ENCODE measurements at regions of chr9 and their contacts with region 1.

Region 1: DNA sequence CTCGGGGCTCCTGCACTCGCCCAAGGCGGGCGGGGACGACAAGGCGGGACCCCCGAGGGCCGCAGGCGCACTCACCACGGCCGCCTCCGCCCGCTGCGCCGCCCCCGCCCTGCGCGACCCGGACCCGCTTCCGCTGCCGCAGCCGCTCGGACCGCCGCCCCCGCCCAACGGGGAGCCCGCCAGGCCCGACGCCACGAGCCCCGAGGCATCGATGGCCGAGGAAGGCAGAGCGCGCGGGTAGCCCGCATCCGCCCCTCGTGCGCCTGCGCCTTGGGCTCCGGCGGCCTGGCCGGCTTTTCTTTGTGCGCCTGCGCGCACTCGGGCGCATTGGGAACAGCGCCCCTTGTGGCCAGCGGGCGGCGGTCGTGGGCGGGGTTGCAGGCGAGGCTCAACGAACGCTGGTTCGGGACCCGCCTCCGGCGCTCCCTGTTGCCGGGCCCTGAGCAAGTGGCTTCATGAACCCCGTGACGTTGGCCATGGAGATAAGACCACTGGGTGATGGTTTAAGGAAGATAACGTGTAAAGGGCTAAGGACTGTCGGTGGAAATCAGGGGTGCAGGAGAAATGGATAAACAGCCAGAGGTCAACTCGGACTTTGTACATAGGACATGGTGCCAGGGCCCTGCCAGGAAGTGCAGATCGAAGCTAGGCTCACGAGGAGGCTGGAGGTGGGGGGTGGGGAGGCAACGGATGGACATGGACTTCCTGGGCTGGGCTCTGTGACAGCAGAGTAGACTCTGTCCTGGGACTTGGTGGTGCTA is at the starts of genes C8G and FBXW5:
- DNase-seq: peak; percentile 89 to 97 (median 96)
- H3K4me3 ChIP-seq: peak within 1 kb of the TSS in 1 of 2 donors; percentile 70
- H3K4me3 Mint-ChIP-seq: peak within 1 kb of the TSS; percentile 75 to 88 (median 85)
- H3K27ac ChIP-seq: peak within 1 kb of the TSS; percentile 59
- H3K27ac Mint-ChIP-seq: peak within 1 kb of the TSS; percentile 66 to 90 (median 81)
- H3K4me1 ChIP-seq: peaks cover 23% of the 10 kb centered on the region
- H3K4me1 Mint-ChIP-seq: peaks cover 3 to 17% (median 9%) of the 10 kb centered on the region in 4 donors
- H3K27me3 ChIP-seq: no peaks in the 10 kb centered on the region
- H3K27me3 Mint-ChIP-seq: no peaks in the 10 kb centered on the region
- total RNA-seq, gene C8G: 2.2 TPM
- total RNA-seq, gene FBXW5: 122 to 123 TPM

Region 2: DNA sequence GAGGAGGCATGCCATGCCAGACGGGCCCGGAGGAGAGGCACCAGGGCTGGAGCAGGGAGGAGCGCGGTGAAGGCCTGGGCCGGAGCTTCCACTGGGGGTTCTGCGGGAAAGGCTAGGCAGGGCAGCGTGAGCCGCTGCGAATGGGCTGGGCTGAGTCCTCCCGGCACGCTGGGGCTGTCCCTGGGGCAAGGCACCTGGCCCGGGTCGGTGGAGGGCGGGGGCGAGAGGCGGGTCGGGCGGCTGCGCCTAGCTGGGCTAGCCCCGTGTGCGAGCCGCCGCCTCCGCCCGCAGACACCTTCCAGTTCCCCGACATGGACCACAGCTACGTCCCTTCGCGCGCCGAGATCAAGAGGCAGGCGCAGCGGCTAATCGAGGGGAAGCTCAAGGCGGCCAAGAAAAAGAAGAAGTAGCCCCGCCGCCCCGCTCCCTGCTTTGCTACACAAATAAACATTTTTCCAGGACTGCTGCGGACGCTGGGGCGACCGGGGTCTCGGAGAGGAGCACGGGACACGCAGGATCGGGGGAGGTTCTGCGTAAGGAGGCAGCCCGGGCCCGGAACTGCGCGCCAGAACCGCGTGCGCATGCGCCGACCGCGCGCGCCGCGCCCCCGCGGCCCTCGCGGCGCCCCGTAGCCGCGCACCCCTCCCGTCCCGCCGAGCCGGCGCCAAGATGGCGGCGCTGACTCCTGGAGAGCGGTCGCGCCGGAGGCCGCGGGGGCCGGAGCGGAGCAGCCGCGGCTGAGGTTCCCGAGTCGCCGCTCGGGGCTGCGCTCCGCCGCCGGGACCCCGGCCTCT is 137.2 kb before region 1 on chr9 and contains the start of gene RABL6:
- CTCF ChIA-PET with region 1: no interaction called
- POLR2A ChIA-PET with region 1: interaction called, 16 read pairs
- intact Hi-C with region 1: no loop called
- DNase-seq: peak; percentile 78 to 90 (median 86)
- H3K4me3 ChIP-seq: peak within 1 kb of the TSS; percentile 61 to 74
- H3K4me3 Mint-ChIP-seq: peak within 1 kb of the TSS; percentile 87 to 93 (median 90)
- H3K27ac ChIP-seq: peak within 1 kb of the TSS; percentile 83
- H3K27ac Mint-ChIP-seq: peak within 1 kb of the TSS; percentile 91 to 96 (median 94)
- H3K4me1 ChIP-seq: peaks cover 40% of the 10 kb centered on the region
- H3K4me1 Mint-ChIP-seq: peaks cover 11 to 45% (median 30%) of the 10 kb centered on the region in 4 donors
- H3K27me3 ChIP-seq: no peaks in the 10 kb centered on the region
- H3K27me3 Mint-ChIP-seq: no peaks in the 10 kb centered on the region
- total RNA-seq, gene RABL6: 65.1 to 70.9 TPM

Region 3: DNA sequence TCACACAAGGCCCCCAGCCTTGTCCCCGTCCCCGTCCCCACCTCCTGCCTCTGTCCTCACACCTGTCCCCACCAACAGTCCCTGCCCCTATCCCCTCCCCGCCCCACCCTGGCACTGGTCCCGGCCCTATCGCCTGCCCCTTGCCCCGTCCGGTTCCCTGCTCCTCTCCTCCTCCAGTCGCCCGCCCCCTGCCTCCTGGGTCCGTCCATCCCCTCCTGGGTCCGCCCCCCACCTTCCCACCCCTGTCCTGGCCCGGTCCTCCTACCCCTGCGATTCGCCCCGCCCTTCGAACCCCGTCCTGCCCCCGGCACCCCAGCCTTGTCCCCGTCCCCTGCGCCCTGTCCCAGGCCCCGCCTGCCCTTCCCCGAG is 79.0 kb before region 1 on chr9:
- CTCF ChIA-PET with region 1: no interaction called
- POLR2A ChIA-PET with region 1: interaction called, 8 read pairs
- intact Hi-C with region 1: loop called (anchors 1 kb)
- DNase-seq: peak in 1 of 5 donors; percentile 50
- H3K4me3 ChIP-seq: peak overlapping the region; percentile 40 to 75
- H3K4me3 Mint-ChIP-seq: peak overlapping the region; percentile 75 to 93 (median 85)
- H3K27ac ChIP-seq: peak overlapping the region; percentile 87
- H3K27ac Mint-ChIP-seq: peak overlapping the region; percentile 75 to 94 (median 85)
- H3K4me1 ChIP-seq: peaks cover 18% of the 10 kb centered on the region
- H3K4me1 Mint-ChIP-seq: peaks cover 4 to 23% (median 11%) of the 10 kb centered on the region in 4 donors
- H3K27me3 ChIP-seq: no peaks in the 10 kb centered on the region
- H3K27me3 Mint-ChIP-seq: no peaks in the 10 kb centered on the region

Region 4: DNA sequence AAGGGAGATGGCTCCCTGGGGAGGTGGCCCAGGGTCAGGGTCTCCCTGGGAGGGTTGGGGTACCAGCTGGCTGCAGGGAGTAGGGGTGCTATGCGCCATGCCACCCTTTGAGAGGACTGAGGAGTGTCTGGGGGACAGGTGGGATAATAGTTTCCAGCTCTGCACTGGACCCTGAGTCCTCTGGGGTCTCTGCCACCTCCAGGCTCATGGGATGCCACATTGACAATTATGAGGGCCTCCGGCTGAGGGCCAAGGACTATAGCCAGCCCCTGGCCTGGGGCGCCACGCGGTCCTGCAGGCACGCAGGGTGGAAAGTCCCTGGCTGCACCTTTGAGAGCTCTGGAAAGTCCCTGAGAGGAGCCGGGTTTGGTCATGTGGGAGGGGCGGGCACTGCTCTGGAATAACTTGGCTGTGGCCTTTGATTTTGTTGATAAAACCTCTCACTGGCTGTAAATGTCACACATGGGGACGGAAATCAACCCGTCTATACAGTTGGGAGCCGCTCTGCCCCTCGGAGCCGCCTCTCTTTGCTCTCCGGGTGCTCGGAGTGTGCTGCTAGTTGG is 42.4 kb before region 1 on chr9:
- CTCF ChIA-PET with region 1: interaction called, 5 read pairs
- POLR2A ChIA-PET with region 1: interaction called, 13 read pairs
- intact Hi-C with region 1: loop called (anchors 2 kb)
- DNase-seq: peak; percentile 78 to 98 (median 84)
- H3K4me3 ChIP-seq: peak overlapping the region; percentile 13 to 53
- H3K4me3 Mint-ChIP-seq: peak overlapping the region; percentile 81 to 90 (median 84)
- H3K27ac ChIP-seq: peak overlapping the region; percentile 96
- H3K27ac Mint-ChIP-seq: peak overlapping the region; percentile 98 to 100 (median 99)
- H3K4me1 ChIP-seq: peaks cover 41% of the 10 kb centered on the region
- H3K4me1 Mint-ChIP-seq: peaks cover 27 to 57% (median 38%) of the 10 kb centered on the region in 4 donors
- H3K27me3 ChIP-seq: no peaks in the 10 kb centered on the region
- H3K27me3 Mint-ChIP-seq: no peaks in the 10 kb centered on the region

Region 5: DNA sequence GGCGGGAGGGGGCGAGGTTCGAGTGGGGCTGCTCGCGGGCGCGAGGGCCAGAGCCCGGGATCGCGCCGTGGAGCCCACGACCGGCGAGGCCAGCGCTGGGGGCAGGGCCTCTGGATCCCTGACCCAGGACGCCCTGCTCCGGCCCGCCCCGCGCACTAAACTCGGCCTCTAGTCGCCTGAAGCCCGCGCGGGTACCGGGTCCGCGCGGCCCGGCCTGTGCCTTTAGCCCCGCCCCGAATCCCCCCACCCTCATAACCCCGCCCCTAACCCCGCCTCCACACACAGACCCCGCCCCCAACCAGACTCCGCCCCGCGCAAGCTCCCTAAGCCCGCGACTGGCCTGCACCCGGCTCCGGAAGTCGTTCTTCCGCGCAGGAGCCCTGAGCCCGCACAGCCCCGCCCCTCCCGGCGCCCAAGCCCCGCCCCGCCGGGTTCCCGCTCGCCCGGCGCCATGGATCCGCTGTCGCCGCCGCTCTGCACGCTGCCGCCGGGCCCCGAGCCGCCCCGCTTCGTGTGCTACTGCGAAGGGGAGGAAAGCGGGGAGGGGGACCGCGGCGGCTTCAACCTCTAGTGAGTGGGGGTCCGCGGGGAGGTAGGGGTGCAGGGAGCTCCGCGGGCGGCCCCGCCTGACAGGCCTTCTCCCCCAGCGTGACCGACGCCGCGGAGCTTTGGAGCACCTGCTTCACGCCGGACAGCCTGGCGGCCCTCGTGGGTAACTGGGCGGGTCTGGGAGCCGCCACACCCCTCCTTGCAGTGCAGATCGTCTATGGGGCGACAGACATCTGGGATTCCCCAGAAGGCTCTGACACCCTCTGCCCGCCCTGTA is 47.5 kb after region 1 on chr9 and contains the start of gene PAXX:
- CTCF ChIA-PET with region 1: interaction called, 13 read pairs
- POLR2A ChIA-PET with region 1: interaction called, 37 read pairs
- intact Hi-C with region 1: loop called (anchors 2 kb)
- DNase-seq: peak; percentile 92 to 93 (median 93)
- H3K4me3 ChIP-seq: peak within 1 kb of the TSS; percentile 86 to 90
- H3K4me3 Mint-ChIP-seq: peak within 1 kb of the TSS; percentile 84 to 92 (median 88)
- H3K27ac ChIP-seq: peak within 1 kb of the TSS; percentile 85
- H3K27ac Mint-ChIP-seq: peak within 1 kb of the TSS; percentile 83 to 94 (median 88)
- H3K4me1 ChIP-seq: peaks cover 41% of the 10 kb centered on the region
- H3K4me1 Mint-ChIP-seq: peaks cover 4 to 41% (median 20%) of the 10 kb centered on the region in 4 donors
- H3K27me3 ChIP-seq: no peaks in the 10 kb centered on the region
- H3K27me3 Mint-ChIP-seq: peaks cover 0 to 5% of the 10 kb centered on the region in 2 donors
- total RNA-seq, gene PAXX: 94.2 to 101 TPM

Measured in CD4-positive, alpha-beta memory T cell (primary cell).